Panc1 (cell line): ENCODE measurements at regions of chr4 and their contacts with region 1.

Region 1: DNA sequence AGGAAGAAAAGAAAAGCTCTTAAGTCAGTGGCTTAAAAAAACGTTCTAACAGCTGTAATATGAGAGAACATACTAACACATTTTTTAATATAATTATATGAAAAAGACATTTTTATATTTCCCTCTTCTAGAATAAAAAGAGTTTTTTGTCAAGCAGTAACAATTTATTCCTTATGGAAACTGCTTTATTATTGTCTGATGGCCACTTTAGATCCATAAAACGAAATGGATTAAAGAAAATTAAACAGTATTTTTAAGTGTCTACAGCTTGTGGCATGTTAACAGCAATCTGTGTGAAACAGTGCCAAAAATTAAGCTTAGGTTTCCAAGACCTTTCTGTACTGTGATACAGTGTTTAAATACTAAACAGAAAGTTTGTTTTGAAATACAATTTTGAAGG is 55.5 kb upstream of the TENM3 start:
- DNase-seq: no peak
- ATAC-seq: no peak
- H3K4me3 ChIP-seq: no peak overlapping the region
- H3K27ac ChIP-seq: no peak overlapping the region
- H3K4me1 ChIP-seq: no peaks in the 10 kb centered on the region
- H3K27me3 ChIP-seq: no peaks in the 10 kb centered on the region
- CTCF ChIP-seq: no peak

Region 2: GRCh38 chr4:181998398-181999295 is 189.0 kb before region 1 on chr4:
- CTCF ChIA-PET with region 1: no interaction called
- POLR2A ChIA-PET with region 1: no interaction called
- in situ Hi-C with region 1: no loop called
- intact Hi-C with region 1: no loop called
- DNase-seq: no peak
- ATAC-seq: no peak
- H3K4me3 ChIP-seq: no peak overlapping the region
- H3K27ac ChIP-seq: no peak overlapping the region
- H3K4me1 ChIP-seq: no peaks in the 10 kb centered on the region
- H3K27me3 ChIP-seq: no peaks in the 10 kb centered on the region
- CTCF ChIP-seq: no peak

Region 3: GRCh38 chr4:182404376-182404775 is 216.7 kb after region 1 on chr4:
- CTCF ChIA-PET with region 1: no interaction called
- POLR2A ChIA-PET with region 1: no interaction called
- in situ Hi-C with region 1: no loop called
- intact Hi-C with region 1: no loop called
- DNase-seq: no peak
- ATAC-seq: no peak
- H3K4me3 ChIP-seq: no peak overlapping the region
- H3K27ac ChIP-seq: no peak overlapping the region
- H3K4me1 ChIP-seq: no peaks in the 10 kb centered on the region
- H3K27me3 ChIP-seq: no peaks in the 10 kb centered on the region
- CTCF ChIP-seq: no peak

Region 4: DNA sequence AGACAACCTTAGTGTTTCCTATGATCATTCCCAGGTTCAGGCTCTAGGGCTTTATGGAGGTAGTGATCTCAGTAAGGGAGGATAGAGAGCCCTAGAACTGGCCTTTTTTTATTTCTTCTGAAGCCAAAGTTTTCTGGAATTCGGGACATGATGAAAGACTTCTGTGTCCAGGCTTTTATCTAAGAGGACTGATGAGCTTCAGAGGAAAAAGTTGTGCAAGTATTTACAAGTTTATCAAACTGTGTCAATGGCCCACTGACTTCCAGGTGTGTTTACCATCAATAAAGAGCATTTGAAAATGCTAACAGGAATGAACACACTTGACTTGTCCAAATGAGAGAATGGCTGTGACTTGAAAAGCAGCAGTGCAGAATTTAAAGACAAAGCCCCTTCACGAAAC is 474.9 kb after region 1 on chr4:
- CTCF ChIA-PET with region 1: no interaction called
- POLR2A ChIA-PET with region 1: no interaction called
- in situ Hi-C with region 1: no loop called
- intact Hi-C with region 1: no loop called
- DNase-seq: no peak
- ATAC-seq: no peak
- H3K4me3 ChIP-seq: no peak overlapping the region
- H3K27ac ChIP-seq: no peak overlapping the region
- H3K4me1 ChIP-seq: no peaks in the 10 kb centered on the region
- H3K27me3 ChIP-seq: no peaks in the 10 kb centered on the region
- CTCF ChIP-seq: no peak

Region 5: DNA sequence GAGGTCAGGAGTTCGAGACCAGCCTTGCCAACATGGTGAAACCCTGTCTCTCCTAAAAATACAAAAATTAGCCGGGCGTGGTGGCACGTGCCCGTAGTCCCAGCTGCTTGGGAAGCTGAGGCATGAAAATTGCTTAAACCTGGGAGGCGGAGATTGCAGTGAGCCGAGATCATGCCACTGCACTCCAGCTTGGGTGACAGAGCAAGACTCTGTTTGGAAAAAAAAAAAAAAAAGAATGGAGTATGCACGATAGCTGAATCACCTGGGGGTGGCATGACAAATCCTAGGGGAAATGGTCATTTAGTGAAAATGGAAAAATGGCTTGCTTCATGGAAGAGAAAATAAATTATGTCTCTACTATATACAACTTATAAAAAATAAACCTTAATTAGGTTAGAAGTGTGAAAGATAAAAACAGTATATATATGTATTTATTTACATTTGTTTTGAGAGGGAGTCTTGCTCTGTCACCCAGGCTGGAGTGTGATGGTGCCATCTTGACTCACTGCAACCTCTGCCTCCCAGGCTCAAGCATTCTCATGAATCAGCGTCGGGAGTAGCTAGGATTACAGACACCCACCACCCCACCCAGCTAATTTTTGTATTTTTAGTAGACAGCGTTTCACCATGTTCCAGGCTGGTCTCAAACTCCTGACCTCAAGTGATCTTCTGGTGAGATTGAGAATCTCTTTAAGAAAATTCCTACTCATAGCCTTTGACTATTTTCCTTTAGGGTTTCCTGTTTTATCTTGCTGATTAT is 1297.9 kb after region 1 on chr4:
- CTCF ChIA-PET with region 1: no interaction called
- POLR2A ChIA-PET with region 1: interaction called, 12 read pairs
- in situ Hi-C with region 1: no loop called
- intact Hi-C with region 1: no loop called
- DNase-seq: no peak
- ATAC-seq: no peak
- H3K4me3 ChIP-seq: no peak overlapping the region
- H3K27ac ChIP-seq: no peak overlapping the region
- H3K4me1 ChIP-seq: no peaks in the 10 kb centered on the region
- H3K27me3 ChIP-seq: no peaks in the 10 kb centered on the region
- CTCF ChIP-seq: no peak